A549 (cell line): ENCODE measurements at regions of chr1 and their contacts with region 1.

Region 1: GRCh38 chr1:161244888-161245287 is 6.9 kb upstream of the NR1I3 start:
- DNase-seq: no peak
- ATAC-seq: no peak
- H3K4me3 ChIP-seq: no peak overlapping the region
- H3K27ac ChIP-seq: no peak overlapping the region
- H3K4me1 ChIP-seq: no peaks in the 10 kb centered on the region
- CTCF ChIP-seq: no peak
- EP300 ChIP-seq: no peak
- POLR2A ChIP-seq: no peak
- RAD21 ChIP-seq: no peak

Region 2: DNA sequence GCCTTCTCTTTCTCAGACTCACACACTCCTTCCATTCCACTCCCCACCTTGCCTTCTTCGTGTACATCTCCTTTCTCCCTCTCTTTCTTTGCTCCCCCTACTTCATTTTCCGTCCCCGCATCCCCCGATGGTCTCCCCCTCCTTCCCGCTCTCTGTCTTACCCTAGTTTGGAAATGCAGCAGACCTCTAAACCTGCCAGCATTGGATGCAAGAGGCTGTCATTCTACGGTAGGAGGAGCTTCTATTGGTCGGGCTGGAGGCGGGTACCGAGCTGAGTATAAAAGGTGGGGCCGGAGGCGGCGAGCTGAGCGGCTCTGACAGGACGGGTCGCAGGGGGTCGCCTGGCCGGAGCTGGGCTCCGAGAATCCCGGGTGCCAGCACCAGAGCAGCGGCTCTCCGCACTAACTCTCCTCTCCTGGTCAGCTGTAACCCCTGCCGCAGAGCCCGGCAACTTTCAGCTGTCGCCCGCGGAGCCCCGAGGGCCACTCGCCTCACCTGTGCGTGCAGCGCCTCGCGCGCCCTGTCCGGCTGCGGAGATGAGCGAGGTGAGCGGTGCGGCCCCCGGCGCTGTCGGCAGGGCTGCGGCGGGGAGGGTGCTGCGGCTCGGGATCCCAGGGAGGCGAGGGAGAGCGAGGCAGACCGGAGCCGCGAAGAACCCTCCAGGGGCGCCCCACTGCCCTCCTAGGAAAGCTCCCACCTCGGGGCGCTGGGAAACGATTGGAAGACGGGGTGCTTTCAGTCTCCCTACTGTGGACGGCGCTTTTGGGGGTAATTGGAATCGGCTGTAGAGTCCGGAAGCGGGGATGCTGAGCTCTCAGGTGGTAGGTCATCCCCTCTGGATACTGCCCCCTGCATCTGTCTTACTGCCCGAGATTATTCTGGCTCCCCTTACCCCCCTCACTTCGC is 13.8 kb after region 1 on chr1 and contains the start of gene PCP4L1:
- CTCF ChIA-PET with region 1: interaction called, 11 read pairs
- POLR2A ChIA-PET with region 1: no interaction called
- DNase-seq: peak; percentile 59 to 73
- ATAC-seq: peak; percentile 81 to 94
- H3K4me3 ChIP-seq: peak within 1 kb of the TSS; percentile 42
- H3K27ac ChIP-seq: peak within 1 kb of the TSS in 1 of 2 experiments; percentile 49; a peak in 2 of 6 replicates
- H3K4me1 ChIP-seq: peaks cover 6% of the 10 kb centered on the region; the same call in 1 of the 3 replicates
- CTCF ChIP-seq: no peak
- EP300 ChIP-seq: no peak
- POLR2A ChIP-seq: no peak
- RAD21 ChIP-seq: no peak
- polyA plus RNA-seq, gene PCP4L1: not detected in 2 replicates

Region 3: GRCh38 chr1:161335796-161336195 is 90.9 kb after region 1 on chr1:
- CTCF ChIA-PET with region 1: no interaction called
- POLR2A ChIA-PET with region 1: no interaction called
- DNase-seq: no peak
- ATAC-seq: no peak
- H3K4me3 ChIP-seq: no peak overlapping the region
- H3K27ac ChIP-seq: no peak overlapping the region
- H3K4me1 ChIP-seq: no peaks in the 10 kb centered on the region
- CTCF ChIP-seq: no peak
- EP300 ChIP-seq: no peak
- POLR2A ChIP-seq: no peak
- RAD21 ChIP-seq: no peak